Activated CD8-positive, alpha-beta T cell treated with anti-CD3 and anti-CD28 coated beads for 36 hours (primary cell): ENCODE measurements at regions of chr12 and their contacts with region 1.

Region 1: GRCh38 chr12:14937689-14938088 is 648 bp downstream of the ERP27 start:
- DNase-seq: no peak
- ATAC-seq: peak; percentile 48
- H3K4me3 Mint-ChIP-seq: no peak overlapping the region
- H3K27ac Mint-ChIP-seq: peak overlapping the region; percentile 55
- H3K4me1 Mint-ChIP-seq: peaks cover 49% of the 10 kb centered on the region
- H3K27me3 Mint-ChIP-seq: no peaks in the 10 kb centered on the region
- CTCF ChIP-seq: no peak

Region 2: DNA sequence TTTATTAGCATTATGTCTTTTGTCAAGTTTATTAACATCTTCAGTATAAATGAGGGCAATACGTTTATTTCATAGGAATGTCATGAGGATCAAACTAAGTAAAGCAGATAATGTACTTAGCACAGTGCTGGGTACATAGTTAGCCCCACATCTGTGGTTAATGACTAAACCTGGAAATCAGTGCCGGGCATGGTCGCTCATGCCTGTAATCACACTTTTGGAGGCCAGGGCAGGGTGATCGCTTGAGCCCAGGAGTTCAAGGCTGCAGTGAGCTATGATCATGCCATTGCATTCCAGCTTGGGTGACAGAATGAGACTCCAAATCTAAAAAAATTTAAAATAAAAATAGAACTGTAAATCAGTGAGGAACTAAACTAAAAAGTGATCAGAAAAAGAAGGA is 196.5 kb before region 1 on chr12:
- CTCF ChIA-PET with region 1: no interaction called
- POLR2A ChIA-PET with region 1: no interaction called
- intact Hi-C with region 1: no loop called
- DNase-seq: no peak
- ATAC-seq: no peak
- H3K4me3 Mint-ChIP-seq: no peak overlapping the region
- H3K27ac Mint-ChIP-seq: no peak overlapping the region
- H3K4me1 Mint-ChIP-seq: no peaks in the 10 kb centered on the region
- H3K27me3 Mint-ChIP-seq: no peaks in the 10 kb centered on the region
- CTCF ChIP-seq: no peak

Region 3: DNA sequence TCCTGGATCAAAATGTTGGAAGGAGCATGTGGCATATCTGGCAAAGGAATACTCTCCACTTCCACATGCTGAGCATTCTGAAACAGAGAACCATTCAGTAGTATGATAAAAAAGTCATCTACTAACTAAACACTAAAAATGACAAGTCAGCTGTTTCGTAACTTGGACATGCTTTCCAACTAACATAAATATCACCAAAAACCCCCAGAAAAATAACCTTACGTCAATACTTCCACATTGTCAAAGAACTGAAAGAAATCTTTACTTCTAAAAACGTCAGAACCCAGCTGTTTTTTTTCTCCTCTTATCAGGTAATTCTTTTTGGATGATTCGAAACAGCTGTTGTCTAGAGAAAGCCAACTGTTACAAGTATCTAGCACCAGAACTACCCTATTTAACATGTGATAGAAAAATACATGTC is 142.7 kb before region 1 on chr12:
- CTCF ChIA-PET with region 1: no interaction called
- POLR2A ChIA-PET with region 1: no interaction called
- intact Hi-C with region 1: no loop called
- DNase-seq: no peak
- ATAC-seq: no peak
- H3K4me3 Mint-ChIP-seq: no peak overlapping the region
- H3K27ac Mint-ChIP-seq: peak overlapping the region; percentile 7
- H3K4me1 Mint-ChIP-seq: peaks cover 3% of the 10 kb centered on the region
- H3K27me3 Mint-ChIP-seq: no peaks in the 10 kb centered on the region
- CTCF ChIP-seq: no peak

Region 4: GRCh38 chr12:14948672-14949071 is 11.0 kb after region 1 on chr12:
- CTCF ChIA-PET with region 1: interaction called, 11 read pairs
- POLR2A ChIA-PET with region 1: interaction called, 7 read pairs
- intact Hi-C with region 1: no loop called
- DNase-seq: peak; percentile 73
- ATAC-seq: peak; percentile 77
- H3K4me3 Mint-ChIP-seq: peak overlapping the region; percentile 68
- H3K27ac Mint-ChIP-seq: peak overlapping the region; percentile 97
- H3K4me1 Mint-ChIP-seq: peaks cover 84% of the 10 kb centered on the region
- H3K27me3 Mint-ChIP-seq: no peaks in the 10 kb centered on the region
- CTCF ChIP-seq: no peak

Region 5: GRCh38 chr12:15074351-15074750 is 136.7 kb after region 1 on chr12:
- CTCF ChIA-PET with region 1: no interaction called
- POLR2A ChIA-PET with region 1: no interaction called
- intact Hi-C with region 1: no loop called
- DNase-seq: no peak
- ATAC-seq: no peak
- H3K4me3 Mint-ChIP-seq: no peak overlapping the region
- H3K27ac Mint-ChIP-seq: no peak overlapping the region
- H3K4me1 Mint-ChIP-seq: peaks cover 13% of the 10 kb centered on the region
- H3K27me3 Mint-ChIP-seq: peaks cover 9% of the 10 kb centered on the region
- CTCF ChIP-seq: no peak